ENCODE measurements at regions of chr10 and their contacts with region 1.

Region 1: GRCh38 chr10:21989453-21990154 is 13.9 kb downstream of the DNAJC1 start:
- DNase-seq: peak; percentile 55
- H3K4me3 ChIP-seq: no peak overlapping the region
- H3K27ac ChIP-seq: no peak overlapping the region
- H3K4me1 ChIP-seq: no peaks in the 10 kb centered on the region
- H3K27me3 ChIP-seq: no peaks in the 10 kb centered on the region
- CTCF ChIP-seq: peak; percentile 55

Region 2: DNA sequence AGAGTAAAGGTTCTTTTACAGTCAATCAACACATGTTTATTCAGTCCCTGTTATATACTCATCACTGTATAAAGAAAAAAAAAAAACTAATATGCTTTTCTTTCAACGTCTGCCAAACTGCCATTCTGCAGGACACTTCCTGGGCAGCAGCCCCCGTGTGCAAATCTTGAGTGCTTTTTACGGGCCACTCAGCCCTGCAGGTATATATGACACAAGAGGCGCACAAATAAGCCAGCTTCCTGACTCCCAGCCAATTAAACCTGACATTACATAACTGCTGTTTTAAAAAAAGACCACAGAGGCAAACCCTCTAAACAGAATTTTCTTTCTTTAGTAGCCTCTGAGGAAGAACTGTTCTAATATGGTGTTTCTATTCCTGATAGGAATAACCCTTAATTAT is 829.5 kb before region 1 on chr10:
- CTCF ChIA-PET with region 1: no interaction called
- POLR2A ChIA-PET with region 1: no interaction called
- intact Hi-C with region 1: no loop called
- DNase-seq: no peak
- H3K4me3 ChIP-seq: no peak overlapping the region
- H3K27ac ChIP-seq: no peak overlapping the region
- H3K4me1 ChIP-seq: no peaks in the 10 kb centered on the region
- H3K27me3 ChIP-seq: no peaks in the 10 kb centered on the region
- CTCF ChIP-seq: no peak

Region 3: GRCh38 chr10:22137542-22137941 is 147.9 kb after region 1 on chr10:
- CTCF ChIA-PET with region 1: no interaction called
- POLR2A ChIA-PET with region 1: no interaction called
- intact Hi-C with region 1: no loop called
- DNase-seq: no peak
- H3K4me3 ChIP-seq: no peak overlapping the region
- H3K27ac ChIP-seq: no peak overlapping the region
- H3K4me1 ChIP-seq: no peaks in the 10 kb centered on the region
- H3K27me3 ChIP-seq: no peaks in the 10 kb centered on the region
- CTCF ChIP-seq: no peak

Region 4: GRCh38 chr10:22325272-22326144 is 335.9 kb after region 1 on chr10:
- CTCF ChIA-PET with region 1: no interaction called
- POLR2A ChIA-PET with region 1: no interaction called
- intact Hi-C with region 1: loop called (anchors 10 kb)
- DNase-seq: peak; percentile 84
- H3K4me3 ChIP-seq: peak overlapping the region; percentile 75
- H3K27ac ChIP-seq: peak overlapping the region; percentile 45
- H3K4me1 ChIP-seq: peaks cover 28% of the 10 kb centered on the region
- H3K27me3 ChIP-seq: peaks cover 12% of the 10 kb centered on the region
- CTCF ChIP-seq: no peak

Region 5: GRCh38 chr10:22427890-22428571 is 438.4 kb after region 1 on chr10:
- CTCF ChIA-PET with region 1: no interaction called
- POLR2A ChIA-PET with region 1: no interaction called
- intact Hi-C with region 1: loop called (anchors 10 kb)
- DNase-seq: peak; percentile 90
- H3K4me3 ChIP-seq: peak overlapping the region; percentile 3
- H3K27ac ChIP-seq: no peak overlapping the region
- H3K4me1 ChIP-seq: peaks cover 26% of the 10 kb centered on the region
- H3K27me3 ChIP-seq: no peaks in the 10 kb centered on the region
- CTCF ChIP-seq: no peak

Region 6: DNA sequence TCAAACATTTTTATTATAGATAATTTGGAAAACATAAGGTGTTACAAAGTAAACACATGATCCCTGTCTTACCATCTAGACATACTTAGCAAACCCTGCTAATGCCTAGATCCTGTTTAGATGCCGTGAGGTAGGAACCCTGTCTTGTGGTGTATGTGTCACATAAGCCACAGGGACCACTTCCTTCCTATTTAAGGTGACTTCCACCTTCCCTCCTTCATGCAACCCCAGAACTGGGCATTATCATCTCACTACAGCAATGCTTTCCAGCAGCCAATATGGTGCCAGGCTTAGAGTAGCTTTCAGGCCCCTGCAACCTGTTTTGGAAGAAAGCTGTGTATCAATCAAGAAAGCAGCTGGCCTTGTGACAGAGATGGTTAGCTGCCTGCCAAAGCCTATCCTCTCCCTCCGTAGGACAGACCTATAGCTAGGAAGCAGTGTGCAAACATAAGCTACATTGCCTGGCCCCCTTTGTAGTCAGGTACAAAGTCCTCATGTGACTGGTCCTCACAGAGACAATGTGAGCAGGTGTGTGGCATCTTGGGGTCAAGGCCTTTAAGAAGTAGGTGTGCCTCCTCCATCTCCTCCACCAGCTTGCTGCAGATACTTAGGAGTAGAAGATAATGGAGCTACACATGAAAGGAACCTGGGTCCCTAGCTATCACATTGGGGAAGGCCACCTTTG is 502.5 kb after region 1 on chr10:
- CTCF ChIA-PET with region 1: no interaction called
- POLR2A ChIA-PET with region 1: no interaction called
- intact Hi-C with region 1: no loop called
- DNase-seq: no peak
- H3K4me3 ChIP-seq: no peak overlapping the region
- H3K27ac ChIP-seq: no peak overlapping the region
- H3K4me1 ChIP-seq: no peaks in the 10 kb centered on the region
- H3K27me3 ChIP-seq: no peaks in the 10 kb centered on the region
- CTCF ChIP-seq: no peak

Region 7: DNA sequence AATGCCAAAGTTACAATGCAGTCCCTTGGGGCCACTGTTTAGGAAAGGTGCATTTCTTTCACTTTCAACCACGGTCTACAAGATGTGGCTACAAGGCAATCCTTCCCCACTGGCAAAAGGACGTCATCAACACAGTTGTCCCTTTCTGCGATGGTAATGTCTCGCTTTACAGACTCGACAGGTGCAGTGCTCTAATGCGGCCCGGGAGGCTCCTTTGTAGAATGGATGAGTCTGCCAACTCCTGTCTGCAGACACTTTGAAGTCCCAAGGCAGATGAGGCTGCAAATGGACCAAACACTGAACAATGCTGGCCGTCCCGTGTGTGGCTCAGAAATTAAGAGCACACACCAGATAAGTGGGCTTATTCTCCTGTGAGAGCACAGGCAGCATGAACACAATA is 591.1 kb after region 1 on chr10:
- CTCF ChIA-PET with region 1: no interaction called
- POLR2A ChIA-PET with region 1: no interaction called
- intact Hi-C with region 1: loop called (anchors 10 kb)
- DNase-seq: no peak
- H3K4me3 ChIP-seq: no peak overlapping the region
- H3K27ac ChIP-seq: no peak overlapping the region
- H3K4me1 ChIP-seq: no peaks in the 10 kb centered on the region
- H3K27me3 ChIP-seq: no peaks in the 10 kb centered on the region
- CTCF ChIP-seq: no peak

Region 8: GRCh38 chr10:23067939-23068775 is 1078.6 kb after region 1 on chr10:
- CTCF ChIA-PET with region 1: no interaction called
- POLR2A ChIA-PET with region 1: no interaction called
- intact Hi-C with region 1: loop called (anchors 5 kb)
- DNase-seq: peak; percentile 79
- H3K4me3 ChIP-seq: no peak overlapping the region
- H3K27ac ChIP-seq: no peak overlapping the region
- H3K4me1 ChIP-seq: peaks cover 5% of the 10 kb centered on the region
- H3K27me3 ChIP-seq: no peaks in the 10 kb centered on the region
- CTCF ChIP-seq: peak; percentile 89

Region 9: DNA sequence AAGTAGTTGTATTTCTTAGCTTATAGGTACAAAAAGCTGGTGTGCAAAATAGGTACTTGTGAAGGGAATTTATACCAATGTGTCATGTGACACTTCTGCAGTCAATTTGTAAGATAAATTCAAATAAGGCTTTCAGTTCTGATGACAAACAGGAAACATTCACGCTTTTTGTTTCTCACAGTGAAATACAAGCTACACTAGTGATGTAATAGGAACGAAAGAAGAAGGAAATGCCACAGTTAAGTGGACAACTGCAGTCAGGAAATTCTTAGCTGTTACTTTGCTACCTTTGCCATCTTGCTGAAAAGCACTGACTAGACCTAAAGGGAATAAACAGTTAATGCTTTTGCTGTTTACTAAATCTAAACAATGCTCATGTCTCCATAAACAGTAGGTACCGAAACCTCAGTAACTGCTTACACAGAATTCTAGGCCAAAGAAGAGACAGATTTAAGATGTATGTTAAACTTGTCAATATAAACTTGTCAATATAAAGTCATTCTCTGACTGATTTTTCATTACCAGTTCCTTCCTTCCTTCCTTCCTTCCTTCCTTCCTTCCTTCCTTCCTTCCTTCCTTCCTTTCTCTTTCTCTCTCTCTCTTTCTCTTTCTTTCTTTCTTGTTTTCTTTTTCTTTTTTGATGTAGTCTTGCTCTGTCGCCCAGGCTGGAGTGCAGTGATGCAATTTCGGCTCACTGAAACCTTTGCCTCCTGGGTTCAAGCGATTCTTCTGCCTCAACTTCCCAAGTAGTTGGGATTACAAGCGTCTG is 1459.4 kb after region 1 on chr10:
- CTCF ChIA-PET with region 1: no interaction called
- POLR2A ChIA-PET with region 1: no interaction called
- intact Hi-C with region 1: no loop called
- DNase-seq: peak; percentile 90
- H3K4me3 ChIP-seq: no peak overlapping the region
- H3K27ac ChIP-seq: peak overlapping the region; percentile 95
- H3K4me1 ChIP-seq: peaks cover 32% of the 10 kb centered on the region
- H3K27me3 ChIP-seq: no peaks in the 10 kb centered on the region
- CTCF ChIP-seq: no peak